Mucosa of descending colon (tissue), 3 donors: ENCODE measurements at regions of chr12 and their contacts with region 1.

Region 1: DNA sequence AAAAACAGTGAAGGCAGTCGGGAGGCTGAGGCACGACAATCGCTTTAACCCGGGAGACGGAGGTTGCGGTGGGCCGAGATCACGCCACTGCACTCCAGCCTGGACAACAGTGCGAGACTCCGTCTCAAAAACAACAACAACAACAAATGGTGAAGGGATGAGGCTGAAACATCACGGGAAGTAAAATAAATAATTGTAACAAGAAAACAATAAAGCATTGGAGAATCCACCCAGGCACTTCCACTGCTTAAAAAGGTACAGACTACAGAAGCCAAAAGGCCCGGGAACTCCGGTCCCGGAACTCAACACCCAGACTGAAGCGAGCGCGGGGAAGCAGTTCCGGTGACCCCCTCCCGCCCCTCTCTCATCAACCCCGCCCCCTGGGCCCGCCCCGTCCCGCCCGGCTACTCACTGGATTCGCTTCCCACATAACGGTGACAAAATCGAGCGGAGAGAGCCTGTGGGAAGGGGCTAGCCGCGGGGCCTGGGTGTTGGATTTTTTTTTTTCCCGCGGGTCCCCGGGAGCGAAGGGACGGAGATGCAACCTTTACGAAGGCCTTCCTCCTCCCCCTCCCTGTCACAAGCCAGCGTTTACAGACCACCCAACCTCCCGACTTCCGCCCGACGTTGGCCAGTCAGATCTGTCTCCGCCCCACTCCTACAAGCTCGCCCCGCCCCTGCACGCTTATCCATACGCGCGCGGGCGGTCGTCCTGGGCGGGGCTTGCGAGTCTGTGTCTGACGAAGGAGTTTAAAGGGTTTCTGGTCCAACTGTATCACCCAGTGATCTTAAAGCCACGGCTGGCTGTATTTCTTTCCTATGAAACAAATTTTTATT is at the start of gene PARP11:
- DNase-seq: peak; percentile 98 to 99 (median 99)
- ATAC-seq: peak; percentile 99
- H3K4me3 ChIP-seq: peak within 1 kb of the TSS; percentile 45
- H3K4me1 ChIP-seq: peaks cover 19% of the 10 kb centered on the region
- CTCF ChIP-seq: no peak
- total RNA-seq, gene PARP11: 8.5 to 12.4 (median 9.5) TPM

Region 2: DNA sequence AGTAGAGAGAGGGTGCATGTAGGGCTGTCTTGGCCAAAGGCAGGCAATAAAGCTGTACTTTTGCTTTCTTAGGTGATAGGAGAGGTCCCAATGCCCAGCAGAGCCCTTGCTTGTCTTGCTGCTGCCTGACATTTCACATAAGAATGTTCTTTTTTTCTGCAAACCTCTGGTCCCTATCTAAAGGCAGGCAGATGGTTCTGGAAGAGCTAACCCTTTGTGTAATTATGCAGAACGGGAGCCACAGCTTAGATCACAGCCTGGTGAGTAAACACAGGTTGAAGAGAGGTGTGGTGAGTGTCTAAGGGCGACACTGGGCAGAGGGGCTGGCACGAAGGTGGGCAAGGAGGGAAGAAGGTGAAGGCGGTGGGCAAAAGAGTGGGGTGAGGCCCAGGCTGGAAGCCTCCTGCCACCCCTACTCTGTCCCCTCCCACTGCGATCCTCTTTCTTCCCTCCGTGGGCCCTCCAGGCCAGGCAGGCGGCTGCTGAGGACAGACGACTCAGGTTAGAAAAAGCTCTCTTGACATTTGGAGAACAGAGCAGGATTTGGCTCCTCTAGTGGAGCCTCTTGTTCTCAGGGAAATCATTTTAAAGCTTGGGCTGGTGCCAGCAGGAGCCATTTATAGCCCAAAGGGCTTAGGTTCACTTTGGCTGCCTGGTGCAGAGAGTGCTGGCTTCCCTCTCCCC is 339.2 kb before region 1 on chr12:
- intact Hi-C with region 1: no loop called
- DNase-seq: peak in 1 of 3 donors; percentile 50
- ATAC-seq: peak; percentile 51
- H3K4me3 ChIP-seq: no peak overlapping the region
- H3K4me1 ChIP-seq: no peaks in the 10 kb centered on the region
- CTCF ChIP-seq: no peak

Region 3: GRCh38 chr12:3770886-3771285 is 102.1 kb before region 1 on chr12:
- intact Hi-C with region 1: no loop called
- DNase-seq: no peak
- ATAC-seq: no peak
- H3K4me3 ChIP-seq: no peak overlapping the region
- H3K4me1 ChIP-seq: no peaks in the 10 kb centered on the region
- CTCF ChIP-seq: no peak

Region 4: DNA sequence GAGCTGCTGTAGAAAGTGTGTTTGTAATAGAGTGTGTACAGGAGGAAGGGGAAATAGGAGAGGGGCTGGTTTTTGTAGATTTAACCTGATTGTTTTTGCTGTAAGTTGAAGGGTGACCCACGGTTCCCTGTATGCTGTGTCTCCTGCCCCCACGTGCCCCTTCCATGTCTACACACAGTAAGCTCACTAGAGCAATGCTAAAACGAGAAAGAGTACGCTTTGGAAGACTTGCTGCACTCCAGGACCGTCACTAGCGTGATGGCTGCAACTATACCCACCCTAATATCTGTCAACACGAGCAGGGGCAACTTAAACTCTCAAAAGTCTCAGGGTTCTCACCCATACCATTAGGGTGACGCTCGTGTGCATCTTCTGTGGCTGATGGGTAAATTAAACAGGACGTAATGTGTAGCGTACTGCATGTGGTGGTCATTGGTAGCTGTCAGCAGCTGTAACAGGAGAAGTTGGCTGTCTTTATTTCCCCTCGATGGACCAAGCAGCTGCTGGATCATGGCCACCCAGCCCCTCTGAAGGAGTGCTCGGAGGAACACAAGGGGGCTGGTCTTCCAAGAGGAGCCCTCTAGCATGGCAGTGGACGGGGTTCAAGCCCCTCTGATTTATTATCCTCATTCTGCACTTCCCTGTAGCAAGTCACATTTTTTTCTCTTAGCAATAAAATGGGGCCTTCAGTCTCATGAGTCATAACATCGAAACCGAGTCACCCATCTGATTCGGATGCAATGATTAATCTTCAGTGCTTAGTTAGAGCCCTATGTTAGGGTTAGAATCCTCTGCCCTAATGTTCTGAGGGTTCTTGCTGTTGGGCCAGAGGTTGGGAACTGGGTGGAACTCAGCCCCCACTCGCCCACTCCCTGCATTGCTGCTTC is 414.6 kb after region 1 on chr12:
- intact Hi-C with region 1: loop called in 1 of 2 experiments (anchors 10 kb)
- DNase-seq: peak in 1 of 3 donors; percentile 28
- ATAC-seq: peak; percentile 57
- H3K4me3 ChIP-seq: no peak overlapping the region
- H3K4me1 ChIP-seq: peaks cover 14% of the 10 kb centered on the region
- CTCF ChIP-seq: no peak

Region 5: DNA sequence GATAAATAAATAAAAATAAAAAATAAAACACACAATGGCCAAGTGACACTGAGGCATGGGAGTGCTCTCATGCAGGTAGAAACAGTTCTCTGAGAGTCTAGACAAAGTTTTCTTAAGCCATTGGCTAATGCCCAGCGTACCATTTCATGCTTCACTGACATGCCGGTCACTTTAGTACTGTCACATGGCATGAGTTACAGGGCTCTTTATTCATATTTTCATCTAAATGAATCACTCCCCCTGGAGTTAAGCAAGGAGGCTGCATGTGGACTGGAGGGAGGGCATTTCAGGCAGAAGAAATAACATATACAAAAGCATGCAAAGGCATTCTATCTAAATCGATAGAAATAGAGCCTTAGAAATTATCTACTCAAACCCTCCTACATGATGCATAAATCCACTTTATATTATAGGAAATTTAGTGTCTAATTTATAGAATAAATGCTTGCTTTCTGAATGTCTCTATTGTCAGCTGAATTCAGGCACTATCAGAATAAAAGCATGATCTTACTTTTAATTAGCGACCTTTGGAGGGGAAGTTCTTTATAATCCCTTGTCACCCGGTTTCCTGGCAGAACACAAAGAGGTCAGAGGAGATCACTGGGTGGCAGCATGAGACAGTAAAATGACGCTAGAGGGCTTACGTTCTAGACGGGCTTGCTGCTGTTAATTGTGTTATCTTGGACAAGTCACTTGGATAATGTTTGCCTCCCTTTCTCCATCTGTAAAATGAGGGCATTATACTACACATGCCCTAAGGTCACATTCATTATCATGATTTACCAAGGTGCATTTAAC is 706.5 kb after region 1 on chr12:
- intact Hi-C with region 1: no loop called
- DNase-seq: peak in 1 of 3 donors; percentile 58
- ATAC-seq: peak; percentile 89
- H3K4me3 ChIP-seq: no peak overlapping the region
- H3K4me1 ChIP-seq: no peaks in the 10 kb centered on the region
- CTCF ChIP-seq: no peak